HepG2 (cell line): ENCODE measurements at regions of chr6 and their contacts with region 1.

Region 1: DNA sequence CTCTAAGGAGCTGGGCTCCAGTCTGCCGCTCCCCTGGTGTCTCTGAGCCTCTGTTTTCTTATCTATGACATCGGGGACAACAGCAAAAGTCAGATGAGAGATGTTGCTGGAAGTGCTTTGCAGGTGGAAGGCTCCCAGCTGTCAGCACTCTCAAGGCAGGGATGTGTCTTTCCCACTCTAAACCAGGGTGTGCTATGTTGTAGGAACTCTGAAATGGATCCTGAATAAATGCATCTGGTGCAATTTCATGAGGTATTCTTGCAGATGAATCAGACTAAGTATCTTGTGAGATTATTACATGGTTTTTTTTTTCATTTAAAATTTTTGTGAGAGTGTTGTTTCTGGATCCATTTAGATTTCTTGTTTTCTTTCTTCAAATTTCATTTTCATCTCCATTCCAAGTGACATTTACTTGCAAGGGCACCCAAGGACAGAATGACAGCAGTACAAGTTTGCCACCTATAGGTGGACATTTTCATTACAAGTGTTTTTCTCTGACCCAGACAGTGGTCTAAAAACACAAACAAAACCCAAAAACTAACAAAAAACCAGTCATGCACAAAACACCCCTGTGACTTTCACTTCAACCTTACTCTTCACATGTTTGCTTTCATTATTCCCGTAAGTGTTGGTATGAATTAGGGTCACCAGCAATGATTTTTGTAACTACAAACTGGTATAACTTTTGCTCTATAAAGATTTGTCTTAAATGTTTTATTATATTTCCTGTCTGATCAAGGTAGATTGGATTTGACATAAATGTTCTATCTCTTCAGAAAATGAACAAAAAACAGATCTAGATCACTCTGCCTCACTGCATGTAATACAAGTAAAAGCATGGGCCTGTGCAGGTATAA is 14.7 kb upstream of the SIM1 start:
- DNase-seq: peak; percentile 27
- ATAC-seq: peak; percentile 75
- H3K4me3 ChIP-seq: no peak overlapping the region
- H3K27ac ChIP-seq: no peak overlapping the region
- H3K4me1 ChIP-seq: peaks cover 15% of the 10 kb centered on the region
- H3K27me3 ChIP-seq: peaks cover 3% of the 10 kb centered on the region in 2 experiments; a peak in 3 of 5 replicates
- CTCF ChIP-seq: peak; percentile 73
- EP300 ChIP-seq: no peak
- POLR2A ChIP-seq: no peak
- RAD21 ChIP-seq: 0 out of 2 replicates have a peak, but pooled peaks have one; percentile 28

Region 2: GRCh38 chr6:100001915-100002388 is 477.5 kb before region 1 on chr6:
- CTCF ChIA-PET with region 1: interaction called, 9 read pairs
- POLR2A ChIA-PET with region 1: no interaction called
- in situ Hi-C with region 1: no loop called
- intact Hi-C with region 1: loop called (anchors 5 kb)
- DNase-seq: peak; percentile 24
- ATAC-seq: peak; percentile 91
- H3K4me3 ChIP-seq: no peak overlapping the region
- H3K27ac ChIP-seq: no peak overlapping the region
- H3K4me1 ChIP-seq: no peaks in the 10 kb centered on the region
- H3K27me3 ChIP-seq: no peaks in the 10 kb centered on the region
- CTCF ChIP-seq: peak; percentile 81
- EP300 ChIP-seq: no peak
- POLR2A ChIP-seq: no peak
- RAD21 ChIP-seq: 0 out of 2 replicates have a peak, but pooled peaks have one; percentile 38

Region 3: DNA sequence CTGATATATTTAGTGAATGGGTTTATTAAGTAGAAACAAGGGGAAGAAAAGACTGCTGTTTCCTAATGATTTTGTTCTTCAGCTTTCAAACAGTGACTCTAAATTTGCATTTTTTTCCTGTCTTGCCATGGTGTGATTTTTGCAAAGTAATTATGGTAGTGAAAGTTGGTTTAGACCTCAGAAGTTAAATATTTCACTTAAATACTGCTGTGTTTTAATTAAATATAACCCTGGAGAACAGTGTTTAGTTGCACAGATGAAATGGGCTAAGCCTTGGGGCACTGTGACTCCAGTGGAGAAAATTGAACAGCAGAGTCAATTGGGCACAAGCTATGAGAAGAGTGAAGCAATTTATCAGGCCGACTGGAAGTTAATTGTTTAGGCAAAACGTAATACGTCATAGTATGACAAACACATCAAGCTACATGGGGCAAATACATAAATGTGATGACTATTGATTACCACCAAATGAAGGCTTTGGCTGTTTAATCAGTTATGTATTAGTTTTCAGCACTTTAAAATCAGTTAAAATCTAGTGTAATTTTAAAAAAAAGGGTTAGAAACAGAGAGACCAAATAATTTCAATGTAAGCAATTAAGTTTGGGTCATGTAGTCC is 374.2 kb before region 1 on chr6:
- CTCF ChIA-PET with region 1: interaction called, 9 read pairs
- POLR2A ChIA-PET with region 1: no interaction called
- in situ Hi-C with region 1: no loop called
- intact Hi-C with region 1: loop called (anchors 2 kb)
- DNase-seq: no peak
- ATAC-seq: no peak
- H3K4me3 ChIP-seq: no peak overlapping the region
- H3K27ac ChIP-seq: no peak overlapping the region
- H3K4me1 ChIP-seq: no peaks in the 10 kb centered on the region
- H3K27me3 ChIP-seq: no peaks in the 10 kb centered on the region
- CTCF ChIP-seq: no peak
- EP300 ChIP-seq: no peak
- POLR2A ChIP-seq: no peak
- RAD21 ChIP-seq: no peak

Region 4: DNA sequence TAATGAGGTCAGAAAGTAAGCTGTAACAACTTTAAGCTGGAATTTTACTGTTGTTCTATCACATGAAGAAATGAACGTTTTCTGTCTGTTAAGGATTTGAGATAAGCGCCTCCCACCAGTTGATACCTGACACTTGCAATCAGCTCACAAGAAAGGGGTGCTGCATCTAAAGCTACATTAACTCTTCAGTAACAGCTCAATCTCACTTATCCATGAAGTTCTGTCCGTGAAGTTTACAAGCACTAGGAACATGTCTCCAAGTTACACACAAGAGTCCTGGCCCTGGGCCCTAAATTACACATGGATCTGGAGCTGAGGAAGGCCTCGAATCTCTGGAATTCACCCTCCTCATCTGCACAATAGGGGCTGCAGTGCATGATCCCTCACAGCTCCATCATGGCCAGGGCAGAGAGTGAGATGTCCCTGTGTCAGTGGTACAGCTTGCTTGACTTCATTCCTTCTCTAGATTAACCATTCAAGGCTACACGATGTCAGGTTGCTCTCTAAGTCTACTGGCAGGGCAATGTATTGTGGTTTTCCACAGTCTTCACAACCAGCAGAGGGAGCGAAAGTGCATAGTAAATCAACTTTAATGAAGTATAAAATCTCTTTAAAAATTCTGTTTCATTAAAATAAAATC is 303.0 kb before region 1 on chr6:
- CTCF ChIA-PET with region 1: no interaction called
- POLR2A ChIA-PET with region 1: no interaction called
- in situ Hi-C with region 1: no loop called
- intact Hi-C with region 1: loop called (anchors 1 kb)
- DNase-seq: peak; percentile 14
- ATAC-seq: peak; percentile 69
- H3K4me3 ChIP-seq: no peak overlapping the region
- H3K27ac ChIP-seq: no peak overlapping the region
- H3K4me1 ChIP-seq: peaks cover 12% of the 10 kb centered on the region; the same call in 1 of the 2 replicates
- H3K27me3 ChIP-seq: no peaks in the 10 kb centered on the region
- CTCF ChIP-seq: peak; percentile 29; the same call in 1 of the 2 replicates
- EP300 ChIP-seq: no peak
- POLR2A ChIP-seq: no peak
- RAD21 ChIP-seq: no peak

Region 5: DNA sequence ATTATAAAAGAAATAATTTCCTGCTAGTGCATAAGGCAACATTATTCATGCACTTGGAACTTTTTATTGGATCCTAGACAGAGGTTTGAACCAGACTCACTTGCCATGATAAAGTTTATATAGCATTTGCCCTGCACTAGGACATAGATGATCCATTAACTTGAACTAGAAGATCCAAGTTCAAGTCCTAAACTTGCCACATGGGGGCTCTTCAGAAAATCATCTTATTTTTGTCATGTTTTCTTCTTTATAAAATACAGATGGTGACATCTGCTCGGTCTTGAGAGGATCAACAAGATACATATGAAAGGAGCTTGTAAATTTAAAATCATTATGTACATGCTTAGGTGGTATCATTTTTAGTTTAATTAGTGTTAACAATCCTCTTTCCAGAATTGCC is 109.1 kb before region 1 on chr6:
- CTCF ChIA-PET with region 1: interaction called, 4 read pairs
- POLR2A ChIA-PET with region 1: no interaction called
- in situ Hi-C with region 1: no loop called
- intact Hi-C with region 1: loop called (anchors 1 kb)
- DNase-seq: no peak
- ATAC-seq: no peak
- H3K4me3 ChIP-seq: no peak overlapping the region
- H3K27ac ChIP-seq: no peak overlapping the region
- H3K4me1 ChIP-seq: no peaks in the 10 kb centered on the region
- H3K27me3 ChIP-seq: no peaks in the 10 kb centered on the region
- CTCF ChIP-seq: no peak
- EP300 ChIP-seq: no peak
- POLR2A ChIP-seq: no peak
- RAD21 ChIP-seq: no peak